ENCODE measurements at regions of chr3 and their contacts with region 1.

Region 1: DNA sequence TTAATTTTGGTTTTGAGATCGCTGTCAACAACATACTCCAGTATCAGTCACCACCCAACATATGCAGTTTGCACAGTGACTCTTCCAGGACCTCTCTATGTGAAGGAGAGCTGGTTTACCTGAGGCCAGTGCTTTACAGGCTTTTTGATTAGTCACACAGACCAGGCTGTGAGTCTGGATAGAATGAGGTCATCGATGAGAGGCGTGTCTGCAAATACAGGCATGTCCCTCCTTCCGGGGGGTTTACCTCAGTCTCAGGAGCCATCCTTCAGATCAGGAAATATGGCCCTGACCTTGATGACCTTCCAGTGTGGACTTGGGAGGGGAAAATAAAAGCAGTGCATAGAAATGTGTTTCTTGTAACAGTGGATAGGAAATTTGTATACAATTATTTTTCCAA is 46.9 kb downstream of the KBTBD12 start:
- DNase-seq: no peak
- ATAC-seq: no peak
- H3K4me3 ChIP-seq: no peak overlapping the region
- H3K4me3 Mint-ChIP-seq: no peak overlapping the region
- H3K27ac ChIP-seq: no peak overlapping the region
- H3K27ac Mint-ChIP-seq: no peak overlapping the region
- H3K4me1 ChIP-seq: no peaks in the 10 kb centered on the region
- H3K4me1 Mint-ChIP-seq: no peaks in the 10 kb centered on the region
- H3K27me3 ChIP-seq: no peaks in the 10 kb centered on the region
- H3K27me3 Mint-ChIP-seq: peaks cover 16 to 20% of the 10 kb centered on the region in 2 donors
- CTCF ChIP-seq: no peak

Region 2: GRCh38 chr3:127929824-127930413 is 32.0 kb before region 1 on chr3:
- intact Hi-C with region 1: loop called (anchors 1 kb)
- DNase-seq: no peak
- ATAC-seq: no peak
- H3K4me3 ChIP-seq: no peak overlapping the region
- H3K4me3 Mint-ChIP-seq: no peak overlapping the region
- H3K27ac ChIP-seq: no peak overlapping the region
- H3K27ac Mint-ChIP-seq: no peak overlapping the region
- H3K4me1 ChIP-seq: peaks cover 3% of the 10 kb centered on the region
- H3K4me1 Mint-ChIP-seq: peaks cover 0 to 7% of the 10 kb centered on the region in 2 donors
- H3K27me3 ChIP-seq: peaks cover 10% of the 10 kb centered on the region
- H3K27me3 Mint-ChIP-seq: peaks cover 16 to 19% of the 10 kb centered on the region in 2 donors
- CTCF ChIP-seq: no peak